K562 (cell line): ENCODE measurements at regions of chr6 and their contacts with region 1.

Region 1: GRCh38 chr6:157841211-157841840 is 18.3 kb downstream of the SNX9 start:
- DNase-seq: peak; percentile 50 to 91 (median 66)
- ATAC-seq: peak; percentile 89
- H3K4me3 ChIP-seq: no peak overlapping the region
- H3K27ac ChIP-seq: peak overlapping the region; percentile 64
- H3K4me1 ChIP-seq: peaks cover 19 to 61% of the 10 kb centered on the region in 2 experiments
- H3K27me3 ChIP-seq: no peaks in the 10 kb centered on the region
- CTCF ChIP-seq: no peak
- EP300 ChIP-seq: peak; percentile 84
- POLR2A ChIP-seq: 0 out of 2 replicates have a peak, but pooled peaks have one; percentile 35
- RAD21 ChIP-seq: 0 out of 4 replicates have a peak, but pooled peaks of 1 of the 2 experiments have one; percentile 16

Region 2: GRCh38 chr6:157830354-157831017 is 10.8 kb before region 1 on chr6:
- CTCF ChIA-PET with region 1: no interaction called
- POLR2A ChIA-PET with region 1: interaction called, 149 read pairs
- in situ Hi-C with region 1: no loop called
- intact Hi-C with region 1: no loop called
- DNase-seq: no peak
- ATAC-seq: peak; percentile 45
- H3K4me3 ChIP-seq: no peak overlapping the region
- H3K27ac ChIP-seq: peak overlapping the region; percentile 22; the same call in 2 of the 3 replicates
- H3K4me1 ChIP-seq: peaks cover 20 to 48% of the 10 kb centered on the region in 2 experiments
- H3K27me3 ChIP-seq: no peaks in the 10 kb centered on the region
- CTCF ChIP-seq: no peak
- EP300 ChIP-seq: no peak
- POLR2A ChIP-seq: no peak
- RAD21 ChIP-seq: no peak

Region 3: DNA sequence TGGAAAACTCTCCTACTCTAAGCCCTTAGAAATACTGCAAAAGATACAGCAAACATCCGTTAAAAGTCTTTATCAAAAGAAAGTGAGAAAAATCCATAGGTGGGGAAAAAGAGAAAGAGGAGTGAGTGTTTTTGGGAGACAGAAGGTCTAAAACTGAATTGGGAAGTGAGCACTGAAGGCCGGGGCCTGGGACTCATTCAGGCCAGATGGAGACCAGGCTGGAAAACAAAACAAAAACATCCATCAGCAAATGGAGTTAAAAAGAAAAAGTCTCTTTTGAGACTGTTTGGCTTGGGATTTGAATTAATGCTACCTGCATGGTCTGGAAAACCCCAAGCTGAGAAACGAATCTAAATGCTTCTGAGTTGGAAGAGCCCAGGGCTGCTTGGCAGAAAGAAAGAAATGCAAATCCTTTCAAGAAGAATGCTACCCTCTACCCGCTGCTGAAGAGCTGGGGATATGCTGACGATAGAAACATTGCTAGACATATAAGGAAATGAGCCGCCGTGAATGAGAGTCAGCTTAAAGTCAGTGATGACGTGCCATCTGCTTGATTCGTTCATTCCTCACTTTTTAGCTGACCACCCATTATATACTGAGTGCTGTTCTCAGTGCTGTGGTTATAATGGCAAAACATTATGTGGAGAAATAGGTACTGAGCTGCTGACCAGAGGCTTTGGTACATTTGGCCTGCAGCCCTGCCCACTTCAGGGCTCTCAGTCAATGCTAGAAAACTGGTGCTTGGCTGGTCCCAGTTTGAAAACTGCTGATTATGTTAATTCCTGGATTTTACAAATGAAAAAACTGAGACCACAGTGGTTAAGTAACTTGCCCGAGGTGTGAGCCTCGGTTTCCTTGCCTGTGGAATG is 442.9 kb after region 1 on chr6:
- CTCF ChIA-PET with region 1: no interaction called
- POLR2A ChIA-PET with region 1: no interaction called
- in situ Hi-C with region 1: no loop called
- intact Hi-C with region 1: no loop called
- DNase-seq: no peak
- ATAC-seq: no peak
- H3K4me3 ChIP-seq: no peak overlapping the region
- H3K27ac ChIP-seq: no peak overlapping the region
- H3K4me1 ChIP-seq: no peaks in the 10 kb centered on the region
- H3K27me3 ChIP-seq: no peaks in the 10 kb centered on the region
- CTCF ChIP-seq: no peak
- EP300 ChIP-seq: no peak
- POLR2A ChIP-seq: no peak
- RAD21 ChIP-seq: no peak